ENCODE measurements at regions of chr20 and their contacts with region 1.

Region 1: DNA sequence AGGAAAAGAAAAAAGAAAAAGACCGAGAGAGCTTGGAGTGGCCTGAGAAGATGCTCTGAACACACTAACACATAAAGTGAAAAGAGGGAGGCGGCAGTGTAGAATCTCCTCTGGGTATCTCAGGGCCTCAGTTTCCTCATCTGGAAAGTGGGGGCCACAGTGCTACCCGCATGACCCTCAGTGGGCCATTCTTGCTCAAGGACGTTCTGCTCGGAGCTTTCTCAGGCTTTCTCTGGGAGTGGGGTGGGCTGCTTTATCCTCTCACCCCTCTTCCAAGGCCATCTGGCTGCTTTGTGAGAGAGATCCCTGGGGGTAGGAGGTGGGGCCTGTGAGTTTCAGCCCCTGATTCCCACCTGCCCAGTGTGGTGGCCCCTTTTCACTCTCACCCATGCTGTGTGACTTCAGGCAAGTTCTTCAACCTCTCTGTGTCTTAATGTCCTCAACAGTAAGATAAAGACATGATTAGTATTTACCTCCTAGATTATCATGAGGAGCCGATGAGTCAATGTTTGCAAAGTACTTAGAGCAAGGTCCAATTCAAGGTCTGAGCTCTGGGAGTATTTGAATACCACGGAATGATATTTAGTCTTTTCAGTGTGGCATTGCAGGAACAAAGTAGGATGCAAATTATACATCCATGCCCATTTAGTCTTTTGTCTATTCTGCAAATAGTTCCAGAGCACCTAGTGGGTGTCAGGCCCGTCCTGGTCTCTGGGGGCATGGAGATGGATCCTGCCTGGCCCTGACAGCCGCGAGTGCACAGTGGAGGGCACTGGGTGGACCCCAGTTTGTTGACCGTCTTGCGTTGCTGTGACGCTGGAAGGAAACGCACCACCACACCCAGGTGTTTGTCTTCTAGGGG is 34.3 kb downstream of the SRC start:
- DNase-seq: no peak
- ATAC-seq: no peak
- H3K4me3 ChIP-seq: no peak overlapping the region
- H3K4me3 Mint-ChIP-seq: no peak overlapping the region
- H3K27ac ChIP-seq: no peak overlapping the region
- H3K27ac Mint-ChIP-seq: no peak overlapping the region
- H3K4me1 ChIP-seq: peaks cover 2 to 18% of the 10 kb centered on the region in 2 experiments
- H3K4me1 Mint-ChIP-seq: peaks cover 6 to 15% (median 12%) of the 10 kb centered on the region in 3 donors
- H3K27me3 ChIP-seq: peaks cover 0 to 2% of the 10 kb centered on the region in 2 experiments
- H3K27me3 Mint-ChIP-seq: no peaks in the 10 kb centered on the region

Region 2: GRCh38 chr20:37745553-37745952 is 365.4 kb after region 1 on chr20:
- CTCF ChIA-PET with region 1: interaction called in 1 of 2 experiments, 17 read pairs
- POLR2A ChIA-PET with region 1: no interaction called
- DNase-seq: peak in 6 of 35 experiments; percentile 0 to 37 (median 2)
- ATAC-seq: peak in 2 of 4 experiments; percentile 63 to 91
- H3K4me3 ChIP-seq: no peak overlapping the region
- H3K4me3 Mint-ChIP-seq: no peak overlapping the region
- H3K27ac ChIP-seq: no peak overlapping the region
- H3K27ac Mint-ChIP-seq: no peak overlapping the region
- H3K4me1 ChIP-seq: peaks cover 0 to 3% of the 10 kb centered on the region in 2 experiments
- H3K4me1 Mint-ChIP-seq: no peaks in the 10 kb centered on the region
- H3K27me3 ChIP-seq: no peaks in the 10 kb centered on the region
- H3K27me3 Mint-ChIP-seq: no peaks in the 10 kb centered on the region

Region 3: DNA sequence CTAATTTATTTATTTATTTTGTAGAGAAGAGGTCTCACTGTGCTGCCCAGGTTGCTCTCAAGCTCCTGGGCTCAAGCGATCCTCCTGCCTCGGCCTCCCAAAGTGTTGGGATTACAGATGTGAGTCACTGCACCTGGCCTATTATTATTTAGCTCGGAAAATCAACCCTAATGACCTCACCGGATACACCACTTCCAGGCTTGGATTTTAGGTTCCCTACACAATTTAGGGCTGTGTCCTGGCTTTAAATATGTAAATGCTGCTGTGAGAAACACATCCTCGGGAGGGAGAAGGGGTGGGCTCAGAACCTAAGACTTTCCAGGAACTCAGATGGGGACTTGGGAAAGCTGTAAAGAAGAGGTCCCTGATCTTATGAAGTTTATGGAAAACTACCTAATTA is 1293.1 kb after region 1 on chr20:
- CTCF ChIA-PET with region 1: no interaction called
- POLR2A ChIA-PET with region 1: interaction called in 1 of 2 experiments, 14 read pairs
- DNase-seq: no peak
- ATAC-seq: no peak
- H3K4me3 ChIP-seq: peak overlapping the region; percentile 59 to 82
- H3K4me3 Mint-ChIP-seq: peak overlapping the region; percentile 74 to 81 (median 80)
- H3K27ac ChIP-seq: no peak overlapping the region
- H3K27ac Mint-ChIP-seq: no peak overlapping the region
- H3K4me1 ChIP-seq: peaks cover 0 to 17% of the 10 kb centered on the region in 2 experiments
- H3K4me1 Mint-ChIP-seq: peaks cover 6 to 15% (median 10%) of the 10 kb centered on the region in 3 donors
- H3K27me3 ChIP-seq: peaks cover 6 to 56% of the 10 kb centered on the region in 2 experiments
- H3K27me3 Mint-ChIP-seq: peaks cover 35 to 63% of the 10 kb centered on the region in 2 donors